CD14-positive monocyte (primary cell): ENCODE measurements at regions of chr12 and their contacts with region 1.

Region 1: DNA sequence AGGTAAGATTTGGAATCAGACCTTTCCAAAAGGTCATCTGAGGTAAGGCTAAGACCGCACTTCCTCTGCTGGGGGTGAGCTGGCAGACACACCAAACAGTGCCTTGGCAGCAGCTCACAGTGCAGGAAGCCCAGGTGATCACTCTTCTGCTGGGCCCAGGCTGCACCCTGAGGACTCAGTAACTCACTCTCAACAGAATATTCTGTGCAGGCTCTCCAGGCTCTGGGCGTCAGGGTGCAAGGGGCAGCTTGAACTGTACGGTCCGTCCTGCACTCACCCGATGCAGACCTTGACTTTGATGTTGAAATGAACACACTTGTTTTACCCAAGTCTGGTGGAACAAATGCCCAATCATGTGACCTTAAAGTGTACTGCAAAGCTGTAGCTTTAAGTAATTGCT is 6.0 kb downstream of the ALKBH2 start:
- DNase-seq: no peak
- H3K4me3 ChIP-seq: no peak overlapping the region
- H3K4me3 Mint-ChIP-seq: no peak overlapping the region
- H3K27ac ChIP-seq: no peak overlapping the region
- H3K27ac Mint-ChIP-seq: peak overlapping the region in 1 of 7 donors; percentile 25
- H3K4me1 ChIP-seq: peaks cover under 1 to 1% of the 10 kb centered on the region in 2 donors
- H3K4me1 Mint-ChIP-seq: peaks cover 6% of the 10 kb centered on the region
- H3K27me3 ChIP-seq: no peaks in the 10 kb centered on the region
- H3K27me3 Mint-ChIP-seq: peaks cover 0 to 2% (median 0%) of the 10 kb centered on the region in 3 donors
- CTCF ChIP-seq: no peak

Region 2: DNA sequence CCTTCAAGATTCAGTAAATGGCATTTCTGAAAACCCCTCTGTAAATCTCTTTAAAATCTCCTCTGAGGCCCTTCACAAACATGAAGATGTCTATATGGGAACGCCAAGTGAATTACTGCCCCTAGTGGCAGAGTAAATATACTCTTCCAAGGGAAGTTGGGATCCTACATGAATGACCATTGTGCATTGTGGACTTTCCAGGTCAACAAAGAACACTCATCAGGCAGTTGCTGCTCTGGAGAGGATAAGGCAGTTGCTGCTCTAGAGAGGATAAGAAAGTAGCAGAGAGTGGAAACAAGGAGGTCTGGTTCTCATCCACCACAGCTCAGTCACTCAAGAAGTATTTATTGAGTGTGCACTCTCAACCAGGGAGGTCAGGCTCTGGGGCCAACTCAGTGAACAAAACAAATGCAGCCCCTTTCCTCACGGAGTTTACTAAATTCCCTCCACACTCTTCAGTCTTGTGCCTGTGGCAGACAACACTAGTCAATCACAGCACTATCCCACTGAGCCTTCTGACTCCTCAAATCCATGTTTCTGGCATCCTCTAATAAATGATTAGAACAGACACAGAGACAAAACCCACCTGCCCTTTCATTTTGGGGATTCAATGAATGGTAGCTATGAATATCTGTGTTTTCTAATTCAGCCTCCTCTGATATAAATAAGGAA is 119.2 kb before region 1 on chr12:
- intact Hi-C with region 1: loop called in 1 of 2 experiments (anchors 10 kb)
- DNase-seq: peak in 2 of 3 donors; percentile 13 to 33
- H3K4me3 ChIP-seq: no peak overlapping the region
- H3K4me3 Mint-ChIP-seq: no peak overlapping the region
- H3K27ac ChIP-seq: no peak overlapping the region
- H3K27ac Mint-ChIP-seq: no peak overlapping the region
- H3K4me1 ChIP-seq: no peaks in the 10 kb centered on the region
- H3K4me1 Mint-ChIP-seq: peaks cover 1% of the 10 kb centered on the region
- H3K27me3 ChIP-seq: no peaks in the 10 kb centered on the region
- H3K27me3 Mint-ChIP-seq: peaks cover 0 to 4% (median 2%) of the 10 kb centered on the region in 3 donors
- CTCF ChIP-seq: peak; percentile 56

Region 3: DNA sequence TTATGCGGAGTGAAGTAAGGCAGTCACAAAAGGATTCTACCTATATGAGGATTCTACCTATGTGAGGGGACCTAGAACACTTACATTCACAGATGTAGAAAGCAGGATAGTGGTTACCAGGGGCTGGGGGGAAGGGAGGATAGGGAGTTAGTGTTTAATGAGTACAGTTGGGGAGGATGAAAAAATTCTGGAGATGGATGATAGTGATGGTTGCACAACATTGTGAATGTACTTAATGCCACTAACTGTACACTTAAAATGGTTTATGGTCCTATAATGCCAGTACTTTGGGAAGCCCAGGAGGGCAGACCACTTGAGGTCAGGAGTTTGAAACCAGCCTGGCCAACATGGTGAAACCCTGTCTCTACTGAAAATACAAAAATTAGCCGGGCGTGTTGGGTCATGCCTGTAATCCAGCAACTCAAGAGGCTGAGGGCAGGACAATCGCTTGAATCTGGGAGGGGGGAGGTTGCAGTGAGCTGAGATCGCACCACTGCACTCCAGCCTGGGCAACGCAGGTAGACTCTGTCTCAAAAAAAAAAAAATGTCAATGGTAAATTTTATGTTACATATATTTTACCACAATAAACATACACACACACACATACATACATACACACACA is 91.8 kb before region 1 on chr12:
- intact Hi-C with region 1: no loop called
- DNase-seq: no peak
- H3K4me3 ChIP-seq: no peak overlapping the region
- H3K4me3 Mint-ChIP-seq: no peak overlapping the region
- H3K27ac ChIP-seq: no peak overlapping the region
- H3K27ac Mint-ChIP-seq: no peak overlapping the region
- H3K4me1 ChIP-seq: no peaks in the 10 kb centered on the region
- H3K4me1 Mint-ChIP-seq: no peaks in the 10 kb centered on the region
- H3K27me3 ChIP-seq: no peaks in the 10 kb centered on the region
- H3K27me3 Mint-ChIP-seq: peaks cover 2 to 8% (median 5%) of the 10 kb centered on the region in 3 donors
- CTCF ChIP-seq: no peak

Region 4: DNA sequence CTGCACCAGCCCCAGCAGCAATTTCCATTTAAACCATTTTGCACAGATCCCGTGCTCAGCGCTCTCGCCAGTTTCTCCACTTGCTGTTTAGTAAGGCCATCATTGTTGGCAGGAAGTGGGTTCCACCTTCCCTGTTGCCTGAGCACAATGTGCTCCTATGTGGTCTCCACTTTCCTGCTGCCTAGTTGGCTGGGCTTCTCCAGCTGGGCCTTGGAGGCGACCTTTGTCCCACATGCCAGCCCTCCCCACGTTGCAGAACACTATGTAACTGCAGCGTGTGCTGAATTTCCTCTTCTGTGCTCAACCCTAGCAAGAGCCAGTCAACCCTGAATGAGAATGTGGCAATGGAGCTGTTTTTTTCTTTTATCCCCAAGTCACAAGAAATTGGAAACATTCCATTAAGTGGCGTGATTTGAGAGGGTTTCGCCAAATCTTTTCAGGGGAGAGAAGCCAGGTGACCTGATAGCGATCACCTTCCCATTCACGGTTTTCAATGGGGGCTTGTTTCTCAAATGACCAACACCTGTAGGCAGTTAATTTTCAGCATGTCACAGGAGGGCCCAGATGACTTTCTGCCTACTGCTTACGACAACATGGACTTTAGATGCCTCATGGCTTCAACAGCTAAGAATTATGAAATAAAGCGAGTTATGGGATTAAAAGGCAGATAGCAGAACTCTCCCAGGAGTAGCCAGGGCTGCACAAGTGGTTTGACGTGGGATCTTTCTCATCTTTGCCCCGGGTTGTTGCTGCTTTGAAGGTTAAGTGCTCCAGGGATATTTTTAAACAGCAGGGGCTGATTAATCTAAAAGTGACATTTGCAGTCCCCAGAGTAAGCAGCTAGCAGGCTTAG is 28.7 kb after region 1 on chr12 and contains the start of gene ACACB:
- intact Hi-C with region 1: no loop called
- DNase-seq: no peak
- H3K4me3 ChIP-seq: no peak within 1 kb of the TSS
- H3K4me3 Mint-ChIP-seq: peak within 1 kb of the TSS in 1 of 2 donors; percentile 72
- H3K27ac ChIP-seq: no peak within 1 kb of the TSS
- H3K27ac Mint-ChIP-seq: peak within 1 kb of the TSS in 2 of 7 donors; percentile 2 to 82
- H3K4me1 ChIP-seq: peaks cover 6 to 12% of the 10 kb centered on the region in 2 donors
- H3K4me1 Mint-ChIP-seq: peaks cover 17% of the 10 kb centered on the region
- H3K27me3 ChIP-seq: no peaks in the 10 kb centered on the region
- H3K27me3 Mint-ChIP-seq: peaks cover 0 to 5% (median 2%) of the 10 kb centered on the region in 3 donors
- CTCF ChIP-seq: no peak
- polyA plus RNA-seq, gene ACACB: 0.14 to 5.0 (median 1.9) TPM